ENCODE measurements at regions of chr7 and their contacts with region 1.

Region 1: GRCh38 chr7:100148559-100149350 is at the start of gene LAMTOR4:
- DNase-seq: peak; percentile 99
- H3K4me3 Mint-ChIP-seq: peak within 1 kb of the TSS; percentile 96
- H3K27ac Mint-ChIP-seq: peak within 1 kb of the TSS; percentile 95
- H3K4me1 Mint-ChIP-seq: peaks cover 21% of the 10 kb centered on the region
- H3K27me3 Mint-ChIP-seq: no peaks in the 10 kb centered on the region
- total RNA-seq, gene LAMTOR4: 125 and 130 TPM in 2 replicates

Region 2: GRCh38 chr7:100088621-100089457 is 59.9 kb before region 1 on chr7 and contains the start of gene COPS6:
- intact Hi-C with region 1: loop called (anchors 2 kb)
- DNase-seq: peak; percentile 84
- H3K4me3 Mint-ChIP-seq: peak within 1 kb of the TSS; percentile 87
- H3K27ac Mint-ChIP-seq: peak within 1 kb of the TSS; percentile 89
- H3K4me1 Mint-ChIP-seq: peaks cover 18% of the 10 kb centered on the region
- H3K27me3 Mint-ChIP-seq: peaks cover 2% of the 10 kb centered on the region
- total RNA-seq, gene COPS6: 116 and 119 TPM in 2 replicates